ENCODE measurements at regions of chr1 and their contacts with region 1.

Region 1: GRCh38 chr1:197327776-197328364 is 59.8 kb downstream of the CRB1 start:
- DNase-seq: peak in 4 of 9 donors; percentile 11 to 23 (median 17)
- ATAC-seq: no peak
- H3K4me3 ChIP-seq: no peak overlapping the region
- H3K4me3 Mint-ChIP-seq: no peak overlapping the region
- H3K27ac ChIP-seq: no peak overlapping the region
- H3K27ac Mint-ChIP-seq: no peak overlapping the region
- H3K4me1 ChIP-seq: no peaks in the 10 kb centered on the region
- H3K4me1 Mint-ChIP-seq: no peaks in the 10 kb centered on the region
- H3K27me3 ChIP-seq: no peaks in the 10 kb centered on the region
- H3K27me3 Mint-ChIP-seq: peaks cover 0 to 3% (median 0%) of the 10 kb centered on the region in 5 donors

Region 2: DNA sequence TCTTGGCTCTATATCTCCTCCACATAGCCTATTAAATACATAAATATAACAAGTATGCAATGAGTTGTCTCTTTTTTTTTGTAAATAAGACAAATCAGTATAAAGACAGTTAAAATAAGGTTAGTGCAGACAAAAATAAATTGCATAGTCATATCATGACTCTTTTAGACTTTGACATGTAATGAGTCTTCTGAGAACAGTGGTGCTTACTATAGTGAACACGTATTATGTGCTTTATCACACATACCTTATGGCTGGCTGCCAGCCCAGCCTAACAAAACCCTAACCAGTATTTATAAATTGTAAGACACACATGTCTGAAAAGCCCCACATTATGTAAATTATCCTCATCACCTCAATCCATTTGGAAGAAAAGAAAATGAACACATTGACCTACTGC is 231.7 kb before region 1 on chr1:
- CTCF ChIA-PET with region 1: no interaction called
- POLR2A ChIA-PET with region 1: no interaction called
- intact Hi-C with region 1: no loop called
- DNase-seq: no peak
- ATAC-seq: no peak
- H3K4me3 ChIP-seq: no peak overlapping the region
- H3K4me3 Mint-ChIP-seq: no peak overlapping the region
- H3K27ac ChIP-seq: no peak overlapping the region
- H3K27ac Mint-ChIP-seq: no peak overlapping the region
- H3K4me1 ChIP-seq: no peaks in the 10 kb centered on the region
- H3K4me1 Mint-ChIP-seq: peaks cover 2 to 22% (median 15%) of the 10 kb centered on the region in 7 donors
- H3K27me3 ChIP-seq: no peaks in the 10 kb centered on the region
- H3K27me3 Mint-ChIP-seq: no peaks in the 10 kb centered on the region

Region 3: DNA sequence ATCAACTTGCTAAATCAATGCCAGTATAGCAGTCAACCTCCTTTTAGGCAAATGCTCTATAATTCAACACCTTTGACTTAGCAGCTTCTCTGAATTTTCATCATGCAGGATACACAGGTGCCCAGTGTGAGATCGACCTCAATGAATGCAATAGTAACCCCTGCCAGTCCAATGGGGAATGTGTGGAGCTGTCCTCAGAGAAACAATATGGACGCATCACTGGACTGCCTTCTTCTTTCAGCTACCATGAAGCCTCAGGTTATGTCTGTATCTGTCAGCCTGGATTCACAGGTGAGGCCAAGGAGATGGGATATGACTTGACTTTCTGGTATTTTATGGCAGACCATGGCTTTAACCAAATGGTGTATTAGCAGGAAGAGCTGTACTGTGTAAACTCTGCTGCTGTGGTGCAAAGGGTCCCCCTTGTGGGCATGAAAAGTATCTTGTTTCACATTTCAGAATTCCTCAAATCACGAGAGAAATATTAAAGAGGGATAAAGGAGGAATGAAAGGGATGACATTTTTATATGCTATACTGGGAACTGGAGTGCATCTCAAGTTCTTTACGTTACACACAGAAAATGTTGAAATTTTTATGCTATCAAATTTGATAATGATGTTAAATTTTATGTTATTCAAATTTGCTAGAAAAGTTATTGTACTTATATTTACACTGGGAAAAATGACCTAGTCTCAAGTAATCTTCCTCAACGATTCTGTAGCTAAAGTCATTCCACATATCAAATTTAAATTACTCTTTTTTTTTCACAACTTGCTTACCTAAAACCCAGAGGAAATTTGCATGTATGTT is 29.1 kb after region 1 on chr1:
- CTCF ChIA-PET with region 1: no interaction called
- POLR2A ChIA-PET with region 1: no interaction called
- intact Hi-C with region 1: loop called in 1 of 2 experiments (anchors 1 kb)
- DNase-seq: peak in 5 of 9 donors; percentile 19 to 36 (median 25)
- ATAC-seq: peak; percentile 68
- H3K4me3 ChIP-seq: no peak overlapping the region
- H3K4me3 Mint-ChIP-seq: no peak overlapping the region
- H3K27ac ChIP-seq: no peak overlapping the region
- H3K27ac Mint-ChIP-seq: no peak overlapping the region
- H3K4me1 ChIP-seq: no peaks in the 10 kb centered on the region
- H3K4me1 Mint-ChIP-seq: peaks cover 0 to 3% (median 0%) of the 10 kb centered on the region in 7 donors
- H3K27me3 ChIP-seq: no peaks in the 10 kb centered on the region
- H3K27me3 Mint-ChIP-seq: no peaks in the 10 kb centered on the region

Region 4: GRCh38 chr1:197367627-197368026 is 39.8 kb after region 1 on chr1:
- CTCF ChIA-PET with region 1: no interaction called
- POLR2A ChIA-PET with region 1: no interaction called
- intact Hi-C with region 1: no loop called
- DNase-seq: no peak
- ATAC-seq: no peak
- H3K4me3 ChIP-seq: no peak overlapping the region
- H3K4me3 Mint-ChIP-seq: no peak overlapping the region
- H3K27ac ChIP-seq: no peak overlapping the region
- H3K27ac Mint-ChIP-seq: no peak overlapping the region
- H3K4me1 ChIP-seq: no peaks in the 10 kb centered on the region
- H3K4me1 Mint-ChIP-seq: no peaks in the 10 kb centered on the region
- H3K27me3 ChIP-seq: no peaks in the 10 kb centered on the region
- H3K27me3 Mint-ChIP-seq: peaks cover 0 to 11% (median 0%) of the 10 kb centered on the region in 5 donors

Region 5: GRCh38 chr1:197521118-197521739 is 193.4 kb after region 1 on chr1:
- CTCF ChIA-PET with region 1: no interaction called
- POLR2A ChIA-PET with region 1: no interaction called
- intact Hi-C with region 1: loop called (anchors 1 to 2 kb)
- DNase-seq: peak in 7 of 9 donors; percentile 2 to 34 (median 24)
- ATAC-seq: no peak
- H3K4me3 ChIP-seq: no peak overlapping the region
- H3K4me3 Mint-ChIP-seq: no peak overlapping the region
- H3K27ac ChIP-seq: no peak overlapping the region
- H3K27ac Mint-ChIP-seq: no peak overlapping the region
- H3K4me1 ChIP-seq: no peaks in the 10 kb centered on the region
- H3K4me1 Mint-ChIP-seq: peaks cover 0 to 5% (median 0%) of the 10 kb centered on the region in 7 donors
- H3K27me3 ChIP-seq: no peaks in the 10 kb centered on the region
- H3K27me3 Mint-ChIP-seq: no peaks in the 10 kb centered on the region